ENCODE measurements at regions of chr5 and their contacts with region 1.

Region 1: DNA sequence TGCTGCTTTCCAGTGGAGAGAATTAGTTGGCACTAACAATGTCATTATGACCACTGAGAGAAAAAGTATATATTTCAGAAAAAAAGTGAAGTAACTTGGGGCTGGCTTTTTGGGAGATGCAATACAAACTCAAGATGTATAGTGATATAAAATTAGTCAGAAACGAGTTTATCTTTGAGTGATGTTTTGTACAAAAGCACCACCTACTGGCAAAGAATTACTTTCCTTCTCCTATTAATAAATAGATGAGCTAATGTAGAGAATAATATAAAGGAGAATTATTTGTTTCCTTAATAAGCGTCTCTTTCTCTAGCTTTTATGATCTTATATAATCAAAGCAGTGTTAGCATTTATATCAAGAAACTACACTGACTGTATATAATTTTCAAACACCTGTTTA is 158.8 kb downstream of the MEF2C start:
- DNase-seq: peak; percentile 8
- ATAC-seq: 0 out of 2 replicates have a peak, but pooled peaks have one; percentile 44
- H3K4me3 ChIP-seq: no peak overlapping the region
- H3K27ac ChIP-seq: no peak overlapping the region
- H3K4me1 ChIP-seq: no peaks in the 10 kb centered on the region
- H3K27me3 ChIP-seq: no peaks in the 10 kb centered on the region
- CTCF ChIP-seq: peak; percentile 20 to 51 (median 27); a peak in 4 of 6 replicates
- POLR2A ChIP-seq: no peak
- RAD21 ChIP-seq: peak; percentile 58

Region 2: DNA sequence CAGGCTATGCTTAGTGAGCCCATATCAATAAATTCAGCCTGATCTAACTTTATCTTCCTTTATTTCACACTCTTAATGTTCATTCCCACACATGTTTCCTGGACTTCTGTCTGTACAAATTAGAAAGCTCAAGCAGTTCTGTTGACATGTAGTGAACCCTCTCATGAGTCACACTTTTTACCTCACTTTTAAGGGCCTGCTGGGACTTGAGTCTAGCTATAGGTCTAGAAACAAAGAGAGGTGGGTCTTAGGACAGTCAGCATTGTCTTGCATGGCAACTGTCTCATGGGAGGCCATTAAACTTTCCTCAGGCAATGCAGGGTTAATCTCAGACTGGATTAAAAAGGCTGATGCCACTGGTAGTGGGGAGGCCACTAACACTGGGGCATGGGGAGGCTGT is 1302.9 kb before region 1 on chr5:
- CTCF ChIA-PET with region 1: no interaction called
- POLR2A ChIA-PET with region 1: no interaction called
- RAD21 ChIA-PET with region 1: no interaction called
- intact Hi-C with region 1: loop called (anchors 1 kb)
- DNase-seq: no peak
- ATAC-seq: no peak
- H3K4me3 ChIP-seq: no peak overlapping the region
- H3K27ac ChIP-seq: no peak overlapping the region
- H3K4me1 ChIP-seq: peaks cover 0 to 6% of the 10 kb centered on the region in 2 experiments; a peak in 1 of 4 replicates
- H3K27me3 ChIP-seq: no peaks in the 10 kb centered on the region
- CTCF ChIP-seq: no peak
- POLR2A ChIP-seq: no peak
- RAD21 ChIP-seq: no peak

Region 3: DNA sequence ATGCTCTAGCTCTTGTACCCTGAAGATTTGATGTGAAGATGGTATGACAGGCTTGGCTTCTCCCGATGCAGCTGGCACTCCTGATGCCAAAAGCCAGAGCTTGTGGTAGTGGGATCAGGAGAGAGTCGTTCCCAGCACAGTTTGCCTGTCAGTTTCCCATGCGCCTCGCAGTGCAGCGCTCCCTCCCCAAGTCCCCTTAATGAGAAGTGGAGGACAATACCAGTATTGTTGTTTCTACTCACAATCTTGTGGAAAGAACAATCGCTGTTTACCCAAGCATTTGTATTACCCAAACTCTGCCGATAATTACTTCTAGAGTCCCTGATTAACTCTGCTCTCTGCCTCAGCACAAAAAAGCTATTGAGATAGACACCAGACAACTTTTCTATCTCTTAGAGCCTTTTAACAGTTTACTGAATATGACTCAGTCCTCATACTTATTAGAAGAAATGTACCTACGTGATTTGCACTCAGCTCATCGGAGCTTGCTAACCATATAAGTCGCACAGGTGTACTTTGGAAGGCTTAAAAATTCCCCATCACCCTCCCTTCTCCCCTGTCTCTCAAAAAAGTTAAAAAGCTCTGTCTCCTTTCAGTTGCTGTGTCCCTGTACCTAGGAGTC is 172.4 kb before region 1 on chr5:
- CTCF ChIA-PET with region 1: no interaction called
- POLR2A ChIA-PET with region 1: no interaction called
- RAD21 ChIA-PET with region 1: no interaction called
- intact Hi-C with region 1: no loop called
- DNase-seq: no peak
- ATAC-seq: no peak
- H3K4me3 ChIP-seq: no peak overlapping the region
- H3K27ac ChIP-seq: no peak overlapping the region
- H3K4me1 ChIP-seq: no peaks in the 10 kb centered on the region
- H3K27me3 ChIP-seq: no peaks in the 10 kb centered on the region
- CTCF ChIP-seq: no peak
- POLR2A ChIP-seq: no peak
- RAD21 ChIP-seq: no peak

Measured in HCT116 (cell line).